Naive thymus-derived CD4-positive, alpha-beta T cell (primary cell): ENCODE measurements at regions of chr4 and their contacts with region 1.

Region 1: DNA sequence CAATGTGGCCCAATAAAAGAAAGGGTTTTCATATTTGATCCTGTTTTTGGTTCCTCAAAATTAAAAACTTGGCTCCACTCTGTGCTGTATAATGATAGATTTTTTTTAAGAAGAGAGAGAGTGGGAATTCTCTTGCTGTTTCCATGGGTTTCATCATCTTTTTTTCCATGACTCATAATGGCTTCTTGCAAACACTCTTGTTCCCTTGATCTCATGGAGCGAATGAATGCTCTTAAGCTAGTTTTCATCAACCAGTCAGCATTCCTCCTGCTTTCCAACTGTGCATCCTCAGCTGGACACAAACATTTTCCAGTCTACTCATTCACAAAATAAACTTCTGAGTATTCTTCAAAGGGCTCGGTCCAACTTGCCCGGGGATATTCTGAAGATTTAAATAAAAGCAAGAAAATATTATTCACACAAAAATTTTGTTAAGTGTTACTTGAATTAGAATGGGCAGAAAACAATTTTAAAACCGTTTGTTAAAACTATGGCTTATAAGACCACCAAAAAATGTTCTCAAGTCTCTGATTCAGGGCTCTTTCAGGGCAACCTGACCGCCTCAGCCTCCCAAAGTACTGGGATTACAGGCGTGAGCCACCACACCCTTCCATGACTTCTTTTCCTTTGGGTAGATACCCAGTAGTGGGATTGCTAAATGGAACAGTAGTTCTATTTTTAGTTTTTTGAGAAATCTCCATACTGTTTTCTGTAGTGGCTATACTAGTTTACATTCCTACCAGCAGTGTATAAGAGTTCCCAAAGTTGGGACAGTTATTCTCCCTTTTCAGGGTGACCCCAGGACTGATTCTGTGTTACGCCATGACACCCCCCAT is 64.7 kb downstream of the TMEM156 start:
- DNase-seq: no peak
- ATAC-seq: no peak
- H3K4me3 ChIP-seq: no peak overlapping the region
- H3K4me3 Mint-ChIP-seq: no peak overlapping the region
- H3K27ac ChIP-seq: no peak overlapping the region
- H3K27ac Mint-ChIP-seq: peak overlapping the region in 4 of 9 donors; percentile 12 to 77 (median 42)
- H3K4me1 ChIP-seq: peaks cover 0 to 3% of the 10 kb centered on the region in 2 donors
- H3K4me1 Mint-ChIP-seq: peaks cover 0 to 20% (median 6%) of the 10 kb centered on the region in 7 donors
- H3K27me3 ChIP-seq: no peaks in the 10 kb centered on the region
- H3K27me3 Mint-ChIP-seq: no peaks in the 10 kb centered on the region

Region 2: DNA sequence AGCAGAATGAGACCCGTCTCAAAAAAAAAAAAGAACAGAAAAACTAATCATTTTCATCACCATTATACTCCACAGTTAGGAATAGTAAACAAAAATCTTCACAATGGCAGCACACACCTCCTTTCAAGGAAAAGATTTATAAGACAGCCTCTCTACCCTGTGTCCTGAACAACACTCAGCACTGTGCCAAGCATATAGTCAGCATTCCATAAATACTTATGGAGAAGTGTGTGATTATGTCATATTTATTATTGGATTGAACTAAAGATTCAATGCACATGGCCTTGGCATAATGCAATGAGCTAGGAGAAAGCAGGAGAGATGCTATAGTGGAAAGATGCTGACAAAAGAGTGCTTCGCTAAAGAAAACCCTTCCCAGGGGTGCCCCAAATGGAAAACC is 47.3 kb before region 1 on chr4:
- CTCF ChIA-PET with region 1: no interaction called
- POLR2A ChIA-PET with region 1: no interaction called
- intact Hi-C with region 1: loop called in 1 of 2 experiments (anchors 5 kb)
- DNase-seq: no peak
- ATAC-seq: no peak
- H3K4me3 ChIP-seq: no peak overlapping the region
- H3K4me3 Mint-ChIP-seq: no peak overlapping the region
- H3K27ac ChIP-seq: no peak overlapping the region
- H3K27ac Mint-ChIP-seq: no peak overlapping the region
- H3K4me1 ChIP-seq: peaks cover 0 to 1% of the 10 kb centered on the region in 2 donors
- H3K4me1 Mint-ChIP-seq: peaks cover 5 to 16% (median 10%) of the 10 kb centered on the region in 7 donors
- H3K27me3 ChIP-seq: no peaks in the 10 kb centered on the region
- H3K27me3 Mint-ChIP-seq: no peaks in the 10 kb centered on the region